ENCODE measurements at regions of chr6 and their contacts with region 1.

Region 1: DNA sequence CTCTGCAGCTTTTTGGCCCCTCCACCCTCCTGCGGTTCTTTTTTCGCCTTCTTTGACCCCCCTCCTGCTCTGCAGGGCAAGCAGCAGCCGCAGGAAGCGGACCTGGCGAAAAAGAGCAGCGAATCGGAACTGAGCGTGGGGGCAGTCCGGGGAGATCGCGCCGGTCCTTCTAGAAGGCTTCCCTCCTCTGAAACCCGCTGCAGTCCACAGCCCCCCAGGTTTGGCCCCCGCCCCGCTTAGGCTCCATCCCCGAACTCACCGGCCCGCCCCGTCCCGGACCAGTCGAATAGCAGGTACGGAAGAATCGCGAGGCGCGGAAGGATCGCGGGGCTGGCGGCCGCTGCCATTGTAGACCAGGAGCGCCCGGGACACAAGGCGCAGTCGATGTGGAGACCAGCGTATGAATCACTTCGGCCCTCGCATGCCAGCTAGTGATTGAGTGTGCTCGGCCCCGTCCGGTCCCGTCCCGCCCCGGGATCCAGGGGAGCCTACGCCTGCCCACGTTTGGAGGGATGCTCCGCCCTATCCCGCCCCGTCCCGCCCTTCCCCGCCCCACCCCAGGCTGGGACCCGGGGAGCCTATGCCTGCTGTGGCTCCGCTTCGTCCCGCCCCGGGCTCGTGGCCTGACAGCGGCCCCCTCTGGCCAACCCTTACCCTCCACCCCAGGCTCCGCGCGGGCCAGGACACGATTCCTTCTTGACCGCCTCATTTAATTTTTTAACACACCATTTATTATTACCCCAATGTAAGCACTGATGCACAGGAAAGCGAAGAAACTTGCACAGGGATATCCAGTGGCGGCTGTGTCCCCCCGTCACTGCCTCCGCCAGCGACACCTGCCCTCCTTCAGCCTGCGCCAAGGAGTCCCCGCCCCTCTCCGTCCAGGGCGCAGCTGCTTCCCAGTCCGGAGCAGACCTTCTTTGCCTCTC is at the start of gene ULBP3:
- DNase-seq: peak; percentile 93
- ATAC-seq: peak; percentile 88
- H3K4me3 ChIP-seq: peak within 1 kb of the TSS; percentile 92
- H3K27ac ChIP-seq: peak within 1 kb of the TSS; percentile 53
- H3K4me1 ChIP-seq: peaks cover 31% of the 10 kb centered on the region
- H3K27me3 ChIP-seq: no peaks in the 10 kb centered on the region
- CTCF ChIP-seq: peak; percentile 50; the same call in 1 of the 2 replicates
- total RNA-seq, gene ULBP3: 20.5 and 23.2 TPM in 2 replicates

Region 2: DNA sequence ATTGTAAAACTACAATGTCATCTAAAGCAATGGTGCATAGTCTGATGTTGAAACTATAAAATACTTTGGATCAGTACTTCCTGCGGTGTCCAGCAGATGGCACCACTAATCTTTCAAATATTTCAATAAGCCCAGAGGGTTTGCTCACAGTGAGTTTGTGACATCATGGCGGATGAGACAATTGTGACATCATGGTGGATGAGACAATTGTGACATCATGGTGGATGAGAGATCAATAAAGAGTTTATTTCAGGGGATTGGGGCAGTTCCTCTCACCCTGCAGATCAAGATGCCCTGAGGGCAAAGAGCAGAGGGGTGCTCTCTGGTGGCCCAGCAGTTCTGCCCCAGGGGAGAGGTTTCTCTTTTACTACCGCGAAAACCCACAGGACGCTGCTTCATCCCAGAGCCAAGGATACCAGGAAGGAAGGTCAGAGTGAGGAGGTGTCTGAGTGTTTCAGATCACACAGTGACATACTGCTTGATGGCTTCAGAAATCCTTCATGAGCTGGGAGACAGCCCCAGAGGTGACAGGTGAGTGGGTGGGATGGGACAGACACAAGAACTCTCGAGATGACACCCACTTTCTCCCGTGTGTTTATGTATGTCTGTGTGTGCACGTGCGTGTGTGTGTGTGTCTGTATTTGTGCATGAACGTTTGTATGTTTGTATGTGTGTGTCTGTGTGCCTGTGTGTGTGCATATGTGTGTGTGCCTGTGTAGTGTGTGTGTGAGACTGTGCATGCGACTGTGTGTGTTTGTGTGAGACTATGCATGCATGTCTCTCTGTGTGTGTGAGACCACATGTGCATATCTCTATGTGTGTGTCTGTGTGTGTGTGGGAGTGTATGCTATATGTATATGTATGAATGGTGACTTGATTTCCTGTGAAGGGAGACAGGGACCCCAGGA is 134.5 kb before region 1 on chr6:
- CTCF ChIA-PET with region 1: interaction called, 14 read pairs
- POLR2A ChIA-PET with region 1: no interaction called
- intact Hi-C with region 1: no loop called
- DNase-seq: peak; percentile 83
- ATAC-seq: peak; percentile 25; the same call in 1 of the 2 replicates
- H3K4me3 ChIP-seq: no peak overlapping the region
- H3K27ac ChIP-seq: no peak overlapping the region
- H3K4me1 ChIP-seq: peaks cover 17% of the 10 kb centered on the region; the same call in 1 of the 2 replicates
- H3K27me3 ChIP-seq: no peaks in the 10 kb centered on the region
- CTCF ChIP-seq: peak; percentile 78

Region 3: GRCh38 chr6:150004783-150005717 is 63.9 kb before region 1 on chr6:
- CTCF ChIA-PET with region 1: interaction called, 4 read pairs
- POLR2A ChIA-PET with region 1: no interaction called
- intact Hi-C with region 1: loop called (anchors 2 kb)
- DNase-seq: peak; percentile 87
- ATAC-seq: peak; percentile 95
- H3K4me3 ChIP-seq: peak overlapping the region; percentile 86
- H3K27ac ChIP-seq: no peak overlapping the region
- H3K4me1 ChIP-seq: peaks cover 9% of the 10 kb centered on the region
- H3K27me3 ChIP-seq: no peaks in the 10 kb centered on the region
- CTCF ChIP-seq: no peak

Region 4: GRCh38 chr6:150026976-150027805 is 41.8 kb before region 1 on chr6:
- CTCF ChIA-PET with region 1: no interaction called
- POLR2A ChIA-PET with region 1: no interaction called
- intact Hi-C with region 1: loop called (anchors 2 kb)
- DNase-seq: no peak
- ATAC-seq: no peak
- H3K4me3 ChIP-seq: no peak overlapping the region
- H3K27ac ChIP-seq: no peak overlapping the region
- H3K4me1 ChIP-seq: peaks cover 17% of the 10 kb centered on the region; the same call in 1 of the 2 replicates
- H3K27me3 ChIP-seq: no peaks in the 10 kb centered on the region
- CTCF ChIP-seq: no peak

Region 5: GRCh38 chr6:150334790-150335783 is 266.1 kb after region 1 on chr6:
- CTCF ChIA-PET with region 1: no interaction called
- POLR2A ChIA-PET with region 1: no interaction called
- intact Hi-C with region 1: loop called (anchors 2 kb)
- DNase-seq: peak; percentile 67
- ATAC-seq: no peak
- H3K4me3 ChIP-seq: no peak overlapping the region
- H3K27ac ChIP-seq: no peak overlapping the region
- H3K4me1 ChIP-seq: peaks cover 8% of the 10 kb centered on the region
- H3K27me3 ChIP-seq: no peaks in the 10 kb centered on the region
- CTCF ChIP-seq: peak; percentile 86